T-cell (primary cell): ENCODE measurements at regions of chr22 and their contacts with region 1.

Region 1: GRCh38 chr22:37658133-37659065 is at the start of gene PDXP:
- DNase-seq: peak; percentile 92 to 99 (median 96)
- ATAC-seq: peak; percentile 92 to 94 (median 93)
- H3K4me3 ChIP-seq: peak within 1 kb of the TSS; percentile 54 to 84
- H3K4me3 Mint-ChIP-seq: peak within 1 kb of the TSS; percentile 81 to 85 (median 83)
- H3K27ac ChIP-seq: peak within 1 kb of the TSS; percentile 63
- H3K27ac Mint-ChIP-seq: peak within 1 kb of the TSS; percentile 89 to 98
- H3K4me1 ChIP-seq: peaks cover 11 to 38% of the 10 kb centered on the region in 2 experiments
- H3K4me1 Mint-ChIP-seq: peaks cover 40 to 42% (median 41%) of the 10 kb centered on the region in 3 donors
- H3K27me3 ChIP-seq: no peaks in the 10 kb centered on the region
- H3K27me3 Mint-ChIP-seq: no peaks in the 10 kb centered on the region
- total RNA-seq, gene PDXP: 3.1 to 11.3 (median 10.7) TPM

Region 2: DNA sequence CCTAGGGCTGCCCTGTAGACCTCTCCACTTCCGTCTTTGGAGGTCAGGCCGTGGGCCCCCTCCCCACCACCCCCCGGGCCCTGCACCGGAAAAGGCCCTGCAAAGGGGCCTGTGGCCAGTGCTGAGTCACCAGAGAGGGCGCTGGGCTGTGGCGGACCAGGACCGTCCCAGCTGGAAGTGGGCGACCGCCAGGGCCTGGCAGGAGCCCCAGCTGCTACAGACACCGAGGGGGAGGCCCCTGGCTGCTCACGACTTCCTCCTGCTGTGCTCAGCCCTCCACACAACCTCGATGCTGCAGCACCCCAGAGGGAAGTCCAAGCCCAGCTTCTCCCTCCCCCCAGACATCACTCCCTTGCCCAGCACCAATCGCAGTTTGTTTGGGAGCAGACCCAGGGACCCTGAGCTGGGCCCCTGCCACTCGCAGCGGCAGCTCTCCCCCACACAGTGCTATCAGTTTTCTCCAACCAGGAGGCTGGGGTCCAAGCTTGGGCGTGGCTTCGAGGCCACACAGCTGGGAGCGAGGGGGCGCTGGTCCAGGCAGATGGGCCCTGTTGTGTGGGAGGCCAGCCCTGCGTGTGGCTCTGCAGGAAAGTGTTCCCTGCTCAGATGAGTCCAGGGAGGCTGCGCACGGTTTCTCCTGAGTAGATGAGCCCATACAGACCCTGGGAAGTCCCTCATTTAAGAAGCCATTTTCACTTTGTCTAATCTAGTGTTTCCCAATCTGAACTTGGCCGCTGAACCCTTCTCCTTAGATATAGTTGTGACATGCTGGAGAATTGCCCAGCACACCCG is 24.6 kb before region 1 on chr22:
- CTCF ChIA-PET with region 1: interaction called in 1 of 2 experiments, 11 read pairs
- POLR2A ChIA-PET with region 1: no interaction called
- DNase-seq: peak in 30 of 35 experiments; percentile 19 to 73 (median 48)
- ATAC-seq: peak; percentile 70 to 77 (median 72)
- H3K4me3 ChIP-seq: peak overlapping the region; percentile 32 to 35
- H3K4me3 Mint-ChIP-seq: peak overlapping the region; percentile 56 to 73 (median 61)
- H3K27ac ChIP-seq: peak overlapping the region; percentile 88
- H3K27ac Mint-ChIP-seq: peak overlapping the region; percentile 93 to 95
- H3K4me1 ChIP-seq: peaks cover 49 to 99% of the 10 kb centered on the region in 2 experiments
- H3K4me1 Mint-ChIP-seq: peaks cover 65 to 80% (median 66%) of the 10 kb centered on the region in 3 donors
- H3K27me3 ChIP-seq: no peaks in the 10 kb centered on the region
- H3K27me3 Mint-ChIP-seq: no peaks in the 10 kb centered on the region

Region 3: DNA sequence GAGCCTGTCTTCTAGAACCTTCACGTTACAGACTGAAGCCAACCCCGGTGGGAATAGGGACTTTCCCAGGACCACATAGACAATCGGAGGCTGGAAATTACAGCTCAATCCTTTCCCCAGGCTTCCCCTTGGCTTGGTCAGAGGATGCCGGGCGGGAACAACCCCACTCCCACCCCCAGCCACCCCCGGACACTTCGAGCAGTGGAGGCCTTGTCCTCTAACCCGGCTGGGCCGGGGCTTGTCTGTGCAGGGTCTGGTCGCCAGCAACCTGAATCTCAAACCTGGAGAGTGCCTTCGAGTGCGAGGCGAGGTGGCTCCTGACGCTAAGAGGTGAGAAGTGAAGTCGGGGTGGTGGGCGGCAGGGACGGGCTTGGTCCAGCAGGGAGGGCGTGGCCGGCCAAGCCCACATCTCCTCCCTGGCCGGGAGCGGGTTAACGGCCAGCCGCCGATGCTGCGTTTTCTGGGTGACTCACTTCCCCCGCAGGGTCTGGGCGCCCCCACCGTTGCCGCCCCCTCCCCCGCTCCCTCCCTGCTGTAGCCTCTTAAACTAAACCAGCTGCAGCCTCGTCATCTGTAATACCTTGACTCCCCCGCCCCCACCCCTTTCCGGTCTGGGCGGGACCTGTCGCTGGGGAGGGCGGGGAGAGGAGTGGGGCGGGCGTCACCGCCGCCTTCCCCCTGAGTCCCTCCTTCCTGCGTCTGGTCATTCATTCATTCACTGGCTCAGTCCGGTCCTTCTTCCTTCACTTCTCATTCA is 18.5 kb after region 1 on chr22:
- CTCF ChIA-PET with region 1: interaction called, 6 to 61 read pairs
- POLR2A ChIA-PET with region 1: interaction called, 4 to 14 read pairs
- DNase-seq: peak; percentile 88 to 96 (median 93)
- ATAC-seq: peak; percentile 86 to 90 (median 87)
- H3K4me3 ChIP-seq: peak overlapping the region; percentile 91 to 95
- H3K4me3 Mint-ChIP-seq: peak overlapping the region; percentile 87 to 97 (median 87)
- H3K27ac ChIP-seq: peak overlapping the region; percentile 96
- H3K27ac Mint-ChIP-seq: peak overlapping the region; percentile 95 to 98
- H3K4me1 ChIP-seq: peaks cover 27 to 76% of the 10 kb centered on the region in 2 experiments
- H3K4me1 Mint-ChIP-seq: peaks cover 48 to 66% (median 57%) of the 10 kb centered on the region in 3 donors
- H3K27me3 ChIP-seq: no peaks in the 10 kb centered on the region
- H3K27me3 Mint-ChIP-seq: no peaks in the 10 kb centered on the region